Heart left ventricle (tissue), 16 donors: ENCODE measurements at regions of chr16 and their contacts with region 1.

Region 1: GRCh38 chr16:3457434-3458252 is 14.2 kb downstream of the NAA60 start:
- DNase-seq: peak; percentile 91 to 95 (median 93)
- ATAC-seq: peak; percentile 69 to 94 (median 90)
- H3K4me3 ChIP-seq: peak overlapping the region; percentile 74 to 99 (median 80)
- H3K27ac ChIP-seq: peak overlapping the region; percentile 94 to 99 (median 98)
- H3K4me1 ChIP-seq: peaks cover 16 to 64% (median 57%) of the 10 kb centered on the region in 12 donors
- H3K27me3 ChIP-seq: no peaks in the 10 kb centered on the region
- CTCF ChIP-seq: peak in 11 of 12 donors; percentile 24 to 64 (median 50)
- POLR2A ChIP-seq: peak in 1 of 2 donors; percentile 56

Region 2: DNA sequence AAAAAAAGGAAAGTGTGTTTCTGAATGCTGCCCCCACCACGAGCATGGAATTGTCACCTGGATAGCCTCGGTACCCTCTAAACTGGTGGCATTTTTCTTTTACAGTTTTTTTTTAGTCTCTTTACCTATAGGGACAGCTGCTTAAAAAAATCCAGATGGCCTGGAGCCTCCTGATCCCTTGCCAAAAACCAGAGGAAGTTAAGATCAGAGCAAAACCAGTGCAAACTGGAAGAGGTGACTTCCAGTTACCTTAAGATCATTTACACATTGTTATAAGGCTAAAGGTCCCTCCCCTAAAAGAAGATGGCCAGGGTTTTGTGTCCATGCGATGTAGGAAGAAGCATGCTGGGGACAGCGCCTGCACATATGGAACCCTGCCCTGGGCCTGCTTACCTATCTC is 204.7 kb before region 1 on chr16:
- intact Hi-C with region 1: no loop called
- DNase-seq: no peak
- ATAC-seq: no peak
- H3K4me3 ChIP-seq: no peak overlapping the region
- H3K27ac ChIP-seq: no peak overlapping the region
- H3K4me1 ChIP-seq: peaks cover 0 to 14% (median 0%) of the 10 kb centered on the region in 12 donors
- H3K27me3 ChIP-seq: peaks cover 0 to 20% (median 0%) of the 10 kb centered on the region in 9 donors
- CTCF ChIP-seq: no peak
- POLR2A ChIP-seq: no peak

Region 3: DNA sequence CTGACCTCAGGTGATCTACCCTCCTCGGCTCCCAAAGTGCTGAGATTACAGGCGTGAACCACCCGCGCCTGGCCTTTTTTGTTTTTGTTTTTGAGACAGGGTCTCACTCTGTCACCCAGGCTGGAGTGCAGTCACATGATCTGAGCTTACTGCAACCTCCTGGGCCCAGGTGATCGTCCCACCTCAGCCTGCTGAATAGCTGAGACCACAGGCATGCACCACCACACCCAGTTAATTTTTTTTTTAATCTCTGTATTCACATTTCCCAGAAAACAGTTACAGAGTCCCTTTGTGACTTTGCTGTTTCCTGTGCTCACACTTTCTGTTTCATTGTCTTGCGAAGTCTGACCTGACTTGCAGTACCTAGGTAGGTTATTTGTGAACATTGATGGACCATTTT is 45.9 kb after region 1 on chr16:
- intact Hi-C with region 1: loop called in 4 of 10 experiments (anchors 1 to 2 kb)
- DNase-seq: no peak
- ATAC-seq: no peak
- H3K4me3 ChIP-seq: no peak overlapping the region
- H3K27ac ChIP-seq: peak overlapping the region in 1 of 12 donors; percentile 74
- H3K4me1 ChIP-seq: peaks cover 4 to 37% (median 14%) of the 10 kb centered on the region in 12 donors
- H3K27me3 ChIP-seq: no peaks in the 10 kb centered on the region
- CTCF ChIP-seq: no peak
- POLR2A ChIP-seq: no peak